ENCODE measurements at regions of chr1 and their contacts with region 1.

Region 1: GRCh38 chr1:108799001-108799400 is 52.5 kb downstream of the STXBP3 start:
- DNase-seq: no peak
- H3K4me3 ChIP-seq: no peak overlapping the region
- H3K27ac ChIP-seq: no peak overlapping the region
- H3K4me1 ChIP-seq: no peaks in the 10 kb centered on the region
- H3K27me3 ChIP-seq: no peaks in the 10 kb centered on the region
- CTCF ChIP-seq: no peak
- EP300 ChIP-seq: no peak
- POLR2A ChIP-seq: no peak

Region 2: GRCh38 chr1:109011335-109011734 is 212.3 kb after region 1 on chr1:
- intact Hi-C with region 1: loop called (anchors 10 kb)
- DNase-seq: no peak
- H3K4me3 ChIP-seq: no peak overlapping the region
- H3K27ac ChIP-seq: no peak overlapping the region
- H3K4me1 ChIP-seq: no peaks in the 10 kb centered on the region
- H3K27me3 ChIP-seq: no peaks in the 10 kb centered on the region
- CTCF ChIP-seq: no peak
- EP300 ChIP-seq: no peak
- POLR2A ChIP-seq: no peak

Measured in esophagus muscularis mucosa (tissue), 4 donors.